ENCODE measurements at regions of chr19 and their contacts with region 1.

Region 1: DNA sequence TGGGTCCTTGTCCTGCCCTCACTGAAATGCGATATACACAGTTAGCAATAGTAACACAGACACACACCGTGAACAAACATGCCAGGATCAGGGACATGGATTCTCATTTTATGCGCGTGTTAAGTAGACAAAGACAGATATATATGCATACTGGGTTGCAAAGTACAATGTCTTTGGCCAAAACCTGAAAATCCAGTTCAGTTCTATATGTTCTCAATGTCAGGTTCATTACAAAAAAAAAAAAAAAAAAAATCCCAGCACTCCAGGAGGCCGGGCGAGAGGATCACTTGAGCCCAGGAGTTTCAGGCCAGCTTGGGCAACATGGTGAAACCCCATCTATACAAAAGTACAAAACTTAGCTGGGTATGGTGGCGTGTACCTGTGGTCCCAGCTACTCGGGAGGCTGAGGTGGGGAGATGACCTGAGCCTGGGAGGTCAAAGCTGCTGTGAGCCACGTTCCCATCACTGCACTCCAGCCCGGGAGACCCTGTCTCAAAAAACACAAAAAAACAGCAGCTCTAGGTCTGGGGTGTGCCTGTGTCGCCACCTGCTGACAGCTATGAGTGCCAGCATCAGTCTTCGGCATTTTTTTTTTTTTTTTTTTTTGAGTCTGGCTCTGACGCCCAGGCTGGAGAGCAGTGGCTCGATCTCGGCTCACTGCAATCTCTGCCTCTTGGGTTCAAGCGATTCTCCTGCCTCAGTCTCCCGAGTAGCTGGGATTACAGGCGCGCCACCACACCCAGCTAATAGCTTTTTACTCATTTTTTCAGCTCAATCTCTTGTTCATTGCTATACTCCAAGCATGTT is 10.3 kb downstream of the AP2S1 start:
- DNase-seq: peak; percentile 51
- H3K4me3 ChIP-seq: no peak overlapping the region
- H3K27ac ChIP-seq: peak overlapping the region; percentile 77 to 81 (median 78)
- H3K4me1 ChIP-seq: peaks cover 13 to 29% (median 17%) of the 10 kb centered on the region in 4 donors
- H3K27me3 ChIP-seq: no peaks in the 10 kb centered on the region
- CTCF ChIP-seq: peak; percentile 75 to 97 (median 84)
- EP300 ChIP-seq: no peak
- POLR2A ChIP-seq: no peak

Region 2: GRCh38 chr19:46728693-46729676 is 111.4 kb before region 1 on chr19:
- in situ Hi-C with region 1: no loop called
- intact Hi-C with region 1: no loop called
- DNase-seq: peak; percentile 80
- H3K4me3 ChIP-seq: no peak overlapping the region
- H3K27ac ChIP-seq: peak overlapping the region in 2 of 4 donors; percentile 30 to 42
- H3K4me1 ChIP-seq: no peaks in the 10 kb centered on the region
- H3K27me3 ChIP-seq: no peaks in the 10 kb centered on the region
- CTCF ChIP-seq: peak; percentile 88 to 96 (median 93)
- EP300 ChIP-seq: no peak
- POLR2A ChIP-seq: no peak

Region 3: DNA sequence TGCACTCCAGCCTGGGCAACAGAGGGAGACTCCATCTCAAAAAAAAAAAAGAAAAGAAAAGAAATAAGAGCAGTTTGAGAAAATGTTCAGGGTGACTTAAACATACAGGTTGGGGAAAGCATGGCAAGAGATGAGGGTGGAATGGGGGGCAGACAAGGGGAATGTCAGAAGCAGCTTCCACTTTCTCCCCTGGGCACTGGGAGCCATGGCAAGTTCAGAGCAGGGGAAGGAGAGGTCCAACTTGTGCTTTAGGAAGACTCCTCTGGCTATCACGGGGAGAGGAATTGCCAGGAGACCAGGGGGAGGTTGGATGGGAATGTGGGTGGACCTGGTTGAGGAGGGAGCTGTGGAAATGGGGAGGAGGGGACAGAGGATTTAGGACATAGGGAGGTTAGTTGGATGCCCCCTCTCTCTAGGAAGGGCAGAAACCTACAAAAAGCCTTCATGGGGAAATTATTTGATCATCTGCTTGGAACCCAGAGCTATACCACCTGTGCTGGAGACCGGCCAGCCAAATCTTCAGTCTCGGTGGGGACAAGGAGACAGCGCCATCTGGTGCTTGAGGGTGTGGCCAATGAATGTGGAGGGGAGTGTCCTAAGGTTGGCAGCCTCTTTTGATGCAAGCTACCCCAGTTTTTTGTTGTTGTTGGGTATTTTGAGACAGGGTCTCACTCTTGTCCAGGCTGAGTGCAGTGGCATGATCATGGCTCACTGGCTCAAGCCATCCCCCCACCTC is 86.8 kb before region 1 on chr19:
- in situ Hi-C with region 1: loop called in 2 of 4 experiments (anchors 5 to 10 kb)
- intact Hi-C with region 1: loop called (anchors 1 kb)
- DNase-seq: peak; percentile 78
- H3K4me3 ChIP-seq: no peak overlapping the region
- H3K27ac ChIP-seq: no peak overlapping the region
- H3K4me1 ChIP-seq: peaks cover 0 to 10% (median 3%) of the 10 kb centered on the region in 4 donors
- H3K27me3 ChIP-seq: no peaks in the 10 kb centered on the region
- CTCF ChIP-seq: peak; percentile 37 to 52 (median 40)
- EP300 ChIP-seq: no peak
- POLR2A ChIP-seq: no peak

Region 4: DNA sequence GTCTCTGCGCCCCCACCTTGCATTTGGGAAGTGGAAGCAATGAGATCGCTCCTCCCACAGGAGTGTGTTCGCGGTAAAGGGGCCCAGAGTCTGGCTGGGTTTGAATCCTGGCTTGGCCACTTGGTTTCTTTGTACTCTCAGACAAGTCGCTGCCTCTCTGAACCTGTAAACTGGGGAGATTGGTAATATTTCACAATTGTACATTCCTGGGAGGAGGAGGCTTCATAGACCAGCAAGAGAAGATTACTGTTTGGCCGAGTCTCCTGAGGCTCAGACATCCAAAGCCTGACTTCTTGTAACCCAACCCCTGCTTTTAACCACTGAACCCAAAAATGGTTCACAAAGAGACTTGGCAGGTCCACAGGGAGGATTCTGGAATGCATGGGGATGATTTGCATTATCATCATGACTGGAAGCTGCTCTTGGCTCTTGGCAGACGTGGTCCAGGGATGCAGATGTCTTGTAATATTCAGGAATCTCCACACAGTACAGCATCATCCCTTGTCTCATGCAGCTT is 80.5 kb before region 1 on chr19:
- in situ Hi-C with region 1: loop called in 3 of 4 experiments (anchors 5 to 10 kb)
- intact Hi-C with region 1: loop called (anchors 1 kb)
- DNase-seq: no peak
- H3K4me3 ChIP-seq: no peak overlapping the region
- H3K27ac ChIP-seq: peak overlapping the region; percentile 44 to 55 (median 48)
- H3K4me1 ChIP-seq: peaks cover 4 to 22% (median 13%) of the 10 kb centered on the region in 4 donors
- H3K27me3 ChIP-seq: no peaks in the 10 kb centered on the region
- CTCF ChIP-seq: no peak
- EP300 ChIP-seq: no peak
- POLR2A ChIP-seq: no peak

Region 5: DNA sequence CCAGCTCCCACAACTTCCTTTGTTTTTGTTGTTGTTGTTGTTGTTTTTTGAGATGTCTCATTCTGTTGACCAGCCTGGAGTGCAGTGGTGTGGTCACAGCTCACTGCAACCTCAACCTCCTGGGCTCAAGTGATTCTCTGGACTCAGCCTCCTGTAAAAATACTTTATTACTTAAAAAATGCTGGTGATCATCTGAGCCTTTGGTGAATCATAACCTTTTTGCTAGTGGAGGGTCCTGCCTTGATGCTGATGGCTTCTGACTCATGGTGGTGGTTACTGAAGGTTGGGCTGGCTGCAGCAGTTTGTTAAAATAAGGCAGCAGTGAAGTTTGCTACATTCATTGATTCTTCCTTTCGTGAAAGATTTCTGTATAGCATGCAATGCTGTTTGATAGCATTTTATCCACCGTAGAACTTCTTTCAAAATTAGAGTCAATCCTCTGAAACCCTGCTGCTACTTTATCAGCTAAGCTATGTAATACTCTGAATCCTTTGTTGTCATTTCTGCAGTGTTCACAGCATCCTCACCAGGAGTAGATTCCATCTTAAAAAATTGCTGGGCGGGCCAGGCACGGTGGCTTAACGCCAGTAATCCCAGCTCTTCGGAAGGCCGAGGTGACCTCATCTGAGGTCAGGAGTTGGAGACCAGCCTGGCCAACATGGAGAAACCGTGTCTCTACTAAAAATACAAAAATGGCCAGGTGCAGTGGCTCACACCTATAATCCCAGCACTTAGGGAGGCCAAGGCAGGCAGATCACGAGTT is 38.5 kb after region 1 on chr19:
- in situ Hi-C with region 1: no loop called
- intact Hi-C with region 1: no loop called
- DNase-seq: no peak
- H3K4me3 ChIP-seq: no peak overlapping the region
- H3K27ac ChIP-seq: no peak overlapping the region
- H3K4me1 ChIP-seq: peaks cover 0 to 8% (median 0%) of the 10 kb centered on the region in 4 donors
- H3K27me3 ChIP-seq: no peaks in the 10 kb centered on the region
- CTCF ChIP-seq: no peak
- EP300 ChIP-seq: no peak
- POLR2A ChIP-seq: no peak

Region 6: GRCh38 chr19:47109541-47110375 is 269.4 kb after region 1 on chr19:
- in situ Hi-C with region 1: no loop called
- intact Hi-C with region 1: loop called (anchors 10 kb)
- DNase-seq: peak; percentile 56
- H3K4me3 ChIP-seq: peak overlapping the region in 3 of 4 donors; percentile 73 to 96 (median 93)
- H3K27ac ChIP-seq: peak overlapping the region; percentile 97 to 100 (median 100)
- H3K4me1 ChIP-seq: peaks cover 37 to 58% (median 53%) of the 10 kb centered on the region in 4 donors
- H3K27me3 ChIP-seq: no peaks in the 10 kb centered on the region
- CTCF ChIP-seq: no peak
- EP300 ChIP-seq: no peak
- POLR2A ChIP-seq: peak; percentile 10

Measured in transverse colon (tissue), 4 donors.